Activated CD4-positive, alpha-beta memory T cell treated with anti-CD3 and anti-CD28 coated beads, Interleukin-2, amount 10 ng/mL, durations not matched to agents 7 days and 5 days (primary cell): ENCODE measurements at regions of chr6 and their contacts with region 1.

Region 1: DNA sequence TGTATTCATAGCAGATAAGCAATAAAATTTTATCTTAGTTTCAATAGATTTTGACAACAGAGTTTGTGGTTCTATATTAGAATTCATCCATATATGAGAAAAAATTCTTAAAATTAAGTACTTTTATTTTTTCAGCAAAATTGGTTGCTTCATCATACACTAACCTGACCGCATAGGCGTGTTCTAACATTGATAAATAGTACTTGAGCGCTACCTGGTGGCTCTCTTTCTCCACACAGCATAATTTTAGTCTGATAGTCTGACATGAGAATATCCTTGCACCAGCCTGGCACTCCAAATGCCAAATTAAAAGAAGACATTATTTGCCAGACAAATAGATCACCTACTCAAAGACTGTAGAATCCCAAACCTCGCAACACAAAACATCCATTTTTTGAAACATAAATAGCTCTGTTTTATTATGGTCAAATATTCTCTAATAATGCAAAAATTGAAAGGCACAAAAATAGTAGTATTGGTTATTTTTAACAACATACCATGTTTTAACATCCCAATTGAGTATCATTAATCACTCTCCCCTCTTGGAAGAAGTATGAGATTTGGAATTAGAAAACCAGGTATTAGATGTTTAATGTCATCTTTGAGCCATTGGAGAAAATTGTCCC is 33.0 kb upstream of the FILIP1 start:
- DNase-seq: peak; percentile 63
- H3K4me3 Mint-ChIP-seq: no peak overlapping the region
- H3K27ac Mint-ChIP-seq: no peak overlapping the region
- H3K4me1 Mint-ChIP-seq: no peaks in the 10 kb centered on the region
- H3K27me3 Mint-ChIP-seq: peaks cover 37% of the 10 kb centered on the region

Region 2: DNA sequence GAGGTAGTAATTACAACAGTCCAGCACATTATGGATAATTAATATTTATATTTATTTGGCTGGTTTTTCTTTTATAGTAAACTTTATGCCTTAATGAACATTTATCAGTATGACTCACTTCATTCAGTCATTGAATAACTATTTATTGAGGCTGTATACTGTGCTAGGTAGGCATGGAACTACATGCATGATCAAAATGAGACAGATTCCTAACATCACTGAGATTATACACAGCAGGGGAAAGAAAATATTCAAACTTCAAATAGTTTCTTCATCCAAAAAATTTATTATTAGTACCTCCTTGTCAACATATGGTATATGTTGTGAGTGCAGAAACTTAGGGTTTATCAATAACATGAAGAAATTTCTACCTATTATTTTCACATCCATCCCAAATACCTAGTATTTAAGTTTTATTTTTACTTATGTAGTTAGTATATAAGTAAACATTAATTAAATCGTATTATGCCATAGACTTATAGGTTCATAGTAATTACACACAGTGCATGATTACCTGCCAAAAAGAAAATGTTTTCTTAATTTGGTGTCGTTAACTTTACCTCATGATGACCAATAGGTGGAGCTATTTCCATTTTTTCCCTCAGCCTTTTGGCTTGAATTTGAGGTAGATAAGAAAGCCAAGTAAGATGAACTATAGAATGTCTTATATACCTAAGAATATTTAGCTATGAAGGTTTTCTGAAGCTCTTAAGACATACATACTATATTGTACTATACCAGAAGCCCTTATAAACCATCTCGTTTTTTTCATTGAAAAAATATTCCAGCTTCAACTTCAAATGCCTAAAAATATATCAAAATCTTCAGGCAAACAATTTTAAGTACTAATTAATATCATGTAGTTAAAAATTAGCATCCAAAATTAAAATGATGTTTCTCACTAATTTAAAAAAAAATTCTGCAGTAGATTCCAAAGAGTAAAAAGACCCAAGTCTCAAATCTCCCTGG is 229.5 kb before region 1 on chr6:
- CTCF ChIA-PET with region 1: interaction called, 33 read pairs
- POLR2A ChIA-PET with region 1: no interaction called
- DNase-seq: no peak
- H3K4me3 Mint-ChIP-seq: no peak overlapping the region
- H3K27ac Mint-ChIP-seq: no peak overlapping the region
- H3K4me1 Mint-ChIP-seq: peaks cover 7% of the 10 kb centered on the region
- H3K27me3 Mint-ChIP-seq: no peaks in the 10 kb centered on the region